Activated B cell treated with CpG ODN at 0.5 μM for 24 hours (primary cell): ENCODE measurements at regions of chr2 and their contacts with region 1.

Region 1: DNA sequence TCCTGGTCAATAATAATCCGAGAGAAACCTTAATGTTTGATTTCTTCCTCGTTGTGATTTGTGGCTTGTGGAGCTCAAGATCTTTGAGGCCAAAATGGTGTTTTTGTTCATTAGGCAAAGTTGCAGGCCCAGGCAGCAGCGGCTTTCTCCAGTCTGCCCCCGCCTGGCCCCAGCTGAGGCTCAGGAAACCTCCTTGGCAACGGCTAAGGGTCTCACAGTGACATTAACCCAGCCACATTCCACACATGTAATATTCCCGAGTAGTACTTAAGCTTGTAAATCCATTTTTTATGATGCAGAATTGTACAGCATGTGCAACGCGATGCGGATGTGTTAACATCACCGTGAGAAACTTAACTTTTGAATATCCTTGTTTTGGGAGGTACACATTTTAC is 200.1 kb downstream of the BCL11A start:
- DNase-seq: no peak
- ATAC-seq: peak; percentile 5
- H3K4me3 Mint-ChIP-seq: peak overlapping the region; percentile 52
- H3K27ac Mint-ChIP-seq: peak overlapping the region; percentile 97
- H3K4me1 Mint-ChIP-seq: peaks cover 100% of the 10 kb centered on the region
- H3K27me3 Mint-ChIP-seq: no peaks in the 10 kb centered on the region
- CTCF ChIP-seq: no peak

Region 2: GRCh38 chr2:59824314-59824713 is 529.1 kb before region 1 on chr2:
- CTCF ChIA-PET with region 1: no interaction called
- POLR2A ChIA-PET with region 1: no interaction called
- intact Hi-C with region 1: no loop called
- DNase-seq: no peak
- ATAC-seq: no peak
- H3K4me3 Mint-ChIP-seq: no peak overlapping the region
- H3K27ac Mint-ChIP-seq: no peak overlapping the region
- H3K4me1 Mint-ChIP-seq: no peaks in the 10 kb centered on the region
- H3K27me3 Mint-ChIP-seq: no peaks in the 10 kb centered on the region
- CTCF ChIP-seq: no peak

Region 3: DNA sequence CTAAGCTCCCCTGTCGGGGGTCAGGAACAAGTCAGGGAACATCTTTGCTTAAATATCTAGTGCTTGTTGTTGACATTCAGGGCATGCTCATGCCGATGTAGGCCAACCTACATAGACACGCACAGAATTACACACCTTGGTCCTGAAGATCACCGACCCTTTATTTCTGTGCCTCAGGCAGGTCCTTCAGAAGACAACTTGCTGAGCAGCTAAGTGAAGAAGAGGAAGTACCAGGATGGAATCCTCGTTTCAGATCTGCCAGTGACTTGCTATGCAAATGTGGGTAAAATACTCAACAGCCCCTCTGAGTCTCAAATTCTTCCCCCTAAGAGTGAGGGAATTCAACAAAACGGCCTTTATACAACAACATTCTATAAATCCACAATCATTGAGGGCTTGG is 294.6 kb before region 1 on chr2:
- CTCF ChIA-PET with region 1: no interaction called
- POLR2A ChIA-PET with region 1: interaction called, 4 read pairs
- intact Hi-C with region 1: loop called (anchors 5 kb)
- DNase-seq: peak; percentile 18
- ATAC-seq: peak; percentile 90
- H3K4me3 Mint-ChIP-seq: peak overlapping the region; percentile 33
- H3K27ac Mint-ChIP-seq: peak overlapping the region; percentile 61
- H3K4me1 Mint-ChIP-seq: peaks cover 26% of the 10 kb centered on the region
- H3K27me3 Mint-ChIP-seq: no peaks in the 10 kb centered on the region
- CTCF ChIP-seq: no peak

Region 4: DNA sequence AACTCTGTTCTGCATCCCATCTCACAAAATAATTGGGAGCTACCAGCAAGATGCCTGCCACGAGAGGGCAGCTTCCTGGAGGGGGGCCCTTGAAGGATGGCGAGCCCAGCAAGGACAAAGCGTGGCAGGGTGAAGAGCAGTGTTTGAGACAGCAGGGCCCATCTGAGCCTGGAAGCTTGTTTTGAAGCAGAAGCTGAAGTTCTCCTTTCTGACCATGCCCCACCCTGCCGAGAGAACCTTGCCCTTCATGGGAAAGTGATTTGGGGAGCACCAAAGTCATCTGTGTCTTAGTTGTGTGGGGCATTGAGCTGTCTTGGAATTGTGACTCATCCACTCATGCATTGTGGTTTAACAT is 16.3 kb before region 1 on chr2:
- CTCF ChIA-PET with region 1: interaction called, 5 read pairs
- POLR2A ChIA-PET with region 1: interaction called, 51 read pairs
- intact Hi-C with region 1: loop called (anchors 1 kb)
- DNase-seq: no peak
- ATAC-seq: peak; percentile 80
- H3K4me3 Mint-ChIP-seq: peak overlapping the region; percentile 32
- H3K27ac Mint-ChIP-seq: peak overlapping the region; percentile 95
- H3K4me1 Mint-ChIP-seq: peaks cover 65% of the 10 kb centered on the region
- H3K27me3 Mint-ChIP-seq: no peaks in the 10 kb centered on the region
- CTCF ChIP-seq: no peak

Region 5: DNA sequence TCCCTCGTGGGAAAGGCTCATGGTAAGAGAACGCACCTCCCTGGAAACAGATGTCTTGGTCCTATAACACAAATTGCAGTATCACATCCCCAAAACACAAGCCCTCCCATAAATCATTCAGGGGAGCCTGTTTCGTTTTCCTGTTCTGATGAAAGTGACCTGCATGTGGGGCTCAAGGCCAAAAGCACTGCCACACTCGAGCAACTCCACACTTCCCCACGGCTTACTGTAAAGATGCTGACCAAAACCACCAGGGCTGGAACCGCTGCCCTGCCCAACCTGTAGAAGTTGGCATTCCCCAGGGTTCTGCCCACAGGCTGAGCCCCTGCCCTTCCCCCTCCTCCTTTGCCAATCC is 60.4 kb after region 1 on chr2:
- CTCF ChIA-PET with region 1: no interaction called
- POLR2A ChIA-PET with region 1: interaction called, 34 read pairs
- intact Hi-C with region 1: loop called (anchors 1 kb)
- DNase-seq: peak; percentile 41
- ATAC-seq: peak; percentile 72
- H3K4me3 Mint-ChIP-seq: peak overlapping the region; percentile 8
- H3K27ac Mint-ChIP-seq: peak overlapping the region; percentile 90
- H3K4me1 Mint-ChIP-seq: peaks cover 87% of the 10 kb centered on the region
- H3K27me3 Mint-ChIP-seq: no peaks in the 10 kb centered on the region
- CTCF ChIP-seq: no peak

Region 6: GRCh38 chr2:60484133-60484645 is 130.8 kb after region 1 on chr2:
- CTCF ChIA-PET with region 1: interaction called, 4 read pairs
- POLR2A ChIA-PET with region 1: interaction called, 18 read pairs
- intact Hi-C with region 1: loop called (anchors 1 kb)
- DNase-seq: no peak
- ATAC-seq: peak; percentile 66
- H3K4me3 Mint-ChIP-seq: peak overlapping the region; percentile 78
- H3K27ac Mint-ChIP-seq: peak overlapping the region; percentile 93
- H3K4me1 Mint-ChIP-seq: peaks cover 96% of the 10 kb centered on the region
- H3K27me3 Mint-ChIP-seq: no peaks in the 10 kb centered on the region
- CTCF ChIP-seq: no peak

Region 7: GRCh38 chr2:60544062-60544461 is 190.7 kb after region 1 on chr2:
- CTCF ChIA-PET with region 1: interaction called, 11 read pairs
- POLR2A ChIA-PET with region 1: interaction called, 223 read pairs
- intact Hi-C with region 1: no loop called
- DNase-seq: no peak
- ATAC-seq: peak; percentile 40
- H3K4me3 Mint-ChIP-seq: peak overlapping the region; percentile 96
- H3K27ac Mint-ChIP-seq: peak overlapping the region; percentile 98
- H3K4me1 Mint-ChIP-seq: peaks cover 89% of the 10 kb centered on the region
- H3K27me3 Mint-ChIP-seq: no peaks in the 10 kb centered on the region
- CTCF ChIP-seq: no peak